ENCODE measurements at regions of chr6 and their contacts with region 1.

Region 1: DNA sequence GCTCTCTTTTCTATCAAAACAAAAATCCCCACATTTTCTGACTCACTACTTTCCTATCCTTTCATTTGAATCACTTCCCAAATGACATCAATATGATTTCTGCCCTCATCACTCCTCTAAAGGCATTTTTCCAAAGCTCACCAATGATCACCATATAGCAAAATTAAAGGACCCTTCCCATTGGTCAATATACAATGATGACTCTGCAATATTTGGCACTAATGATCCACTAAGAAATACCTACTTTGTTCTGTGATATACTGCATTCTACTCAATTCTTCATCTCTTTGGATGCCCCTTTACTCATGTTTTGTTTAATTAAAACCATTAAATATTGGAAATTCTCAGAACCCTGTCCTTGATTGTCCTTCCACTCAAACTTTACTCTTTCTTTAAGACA is 200.3 kb upstream of the PTCHD4 start:
- DNase-seq: no peak
- H3K4me3 ChIP-seq: no peak overlapping the region
- H3K27ac ChIP-seq: no peak overlapping the region
- H3K4me1 ChIP-seq: no peaks in the 10 kb centered on the region
- CTCF ChIP-seq: no peak

Region 2: GRCh38 chr6:47489995-47490394 is 821.3 kb before region 1 on chr6:
- CTCF ChIA-PET with region 1: no interaction called
- POLR2A ChIA-PET with region 1: interaction called, 11 read pairs
- intact Hi-C with region 1: no loop called
- DNase-seq: no peak
- H3K4me3 ChIP-seq: no peak overlapping the region
- H3K27ac ChIP-seq: no peak overlapping the region
- H3K4me1 ChIP-seq: peaks cover 28% of the 10 kb centered on the region
- CTCF ChIP-seq: no peak

Region 3: DNA sequence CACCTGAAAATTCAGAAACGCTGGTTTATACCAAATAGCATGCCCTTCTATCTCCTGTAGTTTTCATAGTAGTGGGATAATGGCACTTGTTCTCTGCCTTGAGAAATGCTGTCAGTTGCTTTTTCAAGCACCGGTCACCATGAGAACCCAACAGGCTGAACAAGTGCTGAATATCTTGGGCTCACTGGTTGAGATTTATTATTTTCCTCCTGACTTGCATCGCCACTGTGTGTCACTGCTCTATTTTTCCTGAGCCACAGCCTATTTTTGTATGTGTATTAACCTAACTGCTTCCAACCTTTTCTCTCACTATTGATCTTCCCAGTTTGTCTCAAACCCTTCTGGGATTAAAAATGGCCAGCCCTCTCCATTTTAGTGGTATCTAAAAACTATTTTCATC is 457.5 kb before region 1 on chr6:
- CTCF ChIA-PET with region 1: no interaction called
- POLR2A ChIA-PET with region 1: no interaction called
- intact Hi-C with region 1: no loop called
- DNase-seq: no peak
- H3K4me3 ChIP-seq: no peak overlapping the region
- H3K27ac ChIP-seq: no peak overlapping the region
- H3K4me1 ChIP-seq: no peaks in the 10 kb centered on the region
- CTCF ChIP-seq: no peak

Region 4: DNA sequence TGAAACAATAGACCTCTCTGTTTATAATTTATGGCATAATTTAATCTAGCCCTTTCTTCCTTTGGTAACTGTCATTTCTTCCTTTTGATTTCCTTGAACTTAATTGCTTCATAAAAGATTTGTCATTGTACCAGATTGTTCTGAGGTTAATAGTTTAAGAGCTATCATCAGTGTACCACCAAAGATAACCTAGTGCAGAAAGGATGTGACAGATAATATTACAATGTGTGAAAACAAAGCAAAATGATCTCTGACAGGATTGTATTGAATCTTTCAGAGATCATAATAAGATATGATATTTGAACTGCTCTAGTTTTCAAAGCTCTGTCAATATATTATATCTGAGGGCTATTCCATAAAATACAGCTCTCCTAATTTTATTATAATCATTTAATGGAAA is 68.2 kb before region 1 on chr6:
- CTCF ChIA-PET with region 1: no interaction called
- POLR2A ChIA-PET with region 1: no interaction called
- intact Hi-C with region 1: no loop called
- DNase-seq: no peak
- H3K4me3 ChIP-seq: no peak overlapping the region
- H3K27ac ChIP-seq: no peak overlapping the region
- H3K4me1 ChIP-seq: no peaks in the 10 kb centered on the region
- CTCF ChIP-seq: no peak